Common myeloid progenitor, CD34-positive (primary cell): ENCODE measurements at regions of chr9 and their contacts with region 1.

Region 1: DNA sequence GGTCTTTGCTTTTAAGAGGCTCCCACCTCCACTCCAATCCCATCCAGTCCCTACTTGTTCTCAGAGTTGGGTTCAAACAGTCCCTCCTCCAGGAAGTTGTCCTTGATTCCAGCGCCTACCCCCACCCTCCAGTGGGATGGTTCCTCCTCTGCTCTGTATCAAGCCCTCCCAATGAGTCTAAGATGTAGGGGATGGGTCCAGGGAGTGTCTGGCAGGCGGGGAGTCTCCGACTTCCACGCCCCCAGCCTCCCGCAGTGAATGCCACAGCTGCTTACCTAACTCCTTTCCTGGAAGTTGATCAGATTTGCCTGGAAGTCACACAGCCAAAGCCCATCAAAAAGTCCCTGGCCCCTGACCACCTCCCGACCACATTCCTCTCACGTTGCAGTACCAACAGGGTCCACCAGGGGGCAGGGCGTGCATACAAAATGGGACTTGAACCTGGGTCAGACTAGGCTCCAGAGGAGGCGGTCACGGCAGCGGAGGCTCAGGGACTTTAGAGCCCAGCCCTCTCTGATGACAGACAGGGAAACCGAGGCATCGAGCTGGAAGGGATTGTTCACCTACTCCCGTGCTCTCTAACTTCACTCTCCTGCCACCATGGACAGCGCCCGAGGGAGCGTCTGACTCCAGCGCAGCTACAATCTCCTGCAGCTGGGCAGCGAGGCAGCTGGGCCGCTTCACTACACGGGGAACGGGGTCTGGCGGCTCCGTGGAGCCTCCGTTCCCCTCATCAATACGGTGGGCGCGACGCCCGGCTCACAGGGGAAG is 25.0 kb upstream of the TDRD7 start:
- DNase-seq: peak; percentile 54 to 86 (median 85)
- H3K4me3 ChIP-seq: peak overlapping the region in 2 of 7 experiments; percentile 11 to 44
- H3K27ac ChIP-seq: no peak overlapping the region
- H3K4me1 ChIP-seq: peaks cover 0 to 9% (median 2%) of the 10 kb centered on the region in 4 experiments
- H3K27me3 ChIP-seq: peaks cover 0 to 11% (median 0%) of the 10 kb centered on the region in 5 experiments

Region 2: GRCh38 chr9:97348866-97349265 is 38.1 kb before region 1 on chr9:
- CTCF ChIA-PET with region 1: no interaction called
- POLR2A ChIA-PET with region 1: no interaction called
- DNase-seq: no peak
- H3K4me3 ChIP-seq: no peak overlapping the region
- H3K27ac ChIP-seq: no peak overlapping the region
- H3K4me1 ChIP-seq: no peaks in the 10 kb centered on the region
- H3K27me3 ChIP-seq: no peaks in the 10 kb centered on the region

Region 3: DNA sequence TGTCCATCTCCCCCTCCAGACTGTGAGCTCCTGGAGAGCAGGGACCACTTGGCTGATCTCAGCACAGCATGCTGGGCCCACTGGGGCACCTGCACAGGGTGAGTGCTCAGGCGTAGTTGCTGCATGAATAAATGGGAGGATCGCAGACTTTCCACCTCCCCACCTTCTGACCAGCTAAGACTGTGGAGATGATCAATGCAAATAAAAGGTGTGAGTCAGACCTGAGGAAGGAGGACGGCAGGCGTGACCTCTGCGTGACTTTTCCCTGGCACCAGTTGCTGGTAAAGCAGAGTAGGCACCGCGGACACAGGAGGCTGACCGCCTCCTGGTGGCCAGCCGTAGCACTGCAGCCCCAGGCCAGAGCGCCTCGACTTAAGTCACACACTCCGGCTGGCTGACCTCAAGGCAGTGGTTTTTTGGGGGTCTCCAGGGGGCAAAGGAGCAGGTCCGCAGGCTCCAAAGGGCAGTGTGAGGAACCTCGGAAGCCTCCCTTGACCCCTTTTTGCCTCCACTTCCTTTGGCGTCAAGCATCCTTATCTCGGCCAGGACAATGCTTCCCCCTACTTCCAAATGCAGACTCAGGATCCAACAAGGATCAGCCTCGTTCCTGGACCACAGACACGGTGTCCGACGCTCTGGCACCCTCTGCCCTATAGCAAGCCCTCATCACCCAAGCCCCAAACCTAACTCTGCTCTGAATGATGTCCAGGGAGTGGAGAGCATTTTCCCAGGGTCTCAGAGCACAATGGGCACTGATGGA is 12.3 kb after region 1 on chr9:
- CTCF ChIA-PET with region 1: interaction called, 31 read pairs
- POLR2A ChIA-PET with region 1: no interaction called
- DNase-seq: peak; percentile 65 to 73 (median 69)
- H3K4me3 ChIP-seq: no peak overlapping the region
- H3K27ac ChIP-seq: no peak overlapping the region
- H3K4me1 ChIP-seq: no peaks in the 10 kb centered on the region
- H3K27me3 ChIP-seq: no peaks in the 10 kb centered on the region